H1 (cell line): ENCODE measurements at regions of chr17 and their contacts with region 1.

Region 1: DNA sequence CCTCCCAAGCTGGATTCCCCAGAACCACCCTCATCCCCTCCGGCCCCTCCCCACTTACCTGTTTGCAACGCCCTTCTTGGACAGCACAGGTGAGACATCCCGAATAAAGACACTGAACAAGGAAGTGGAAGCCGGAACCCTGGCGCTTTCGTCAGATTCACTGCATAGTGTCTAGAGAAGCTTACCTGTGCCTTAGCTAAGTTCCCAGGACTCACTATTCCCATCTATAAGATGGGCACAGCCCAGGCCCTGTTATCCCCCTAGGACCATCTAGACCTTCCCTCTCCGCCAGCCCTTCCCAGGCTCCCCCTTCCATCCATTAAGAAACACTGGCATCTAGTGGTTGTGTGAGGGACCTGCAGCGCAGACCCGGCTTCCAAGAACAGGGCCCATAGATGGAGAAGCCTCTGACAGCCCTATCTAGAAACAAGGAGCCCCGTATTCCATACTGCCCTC is 26.9 kb upstream of the RPL38 start:
- DNase-seq: peak; percentile 50 to 85
- H3K4me3 ChIP-seq: no peak overlapping the region
- H3K27ac ChIP-seq: no peak overlapping the region
- H3K4me1 ChIP-seq: 0 out of 7 replicates have a peak, but pooled peaks cover 0 to 4% (median 0%) of the 10 kb centered on the region in 4 experiments
- H3K27me3 ChIP-seq: 0 out of 7 replicates have a peak, but pooled peaks cover 0 to 1% (median 0%) of the 10 kb centered on the region in 4 experiments
- CTCF ChIP-seq: peak; percentile 86 to 97 (median 95)
- EP300 ChIP-seq: no peak
- POLR2A ChIP-seq: no peak
- RAD21 ChIP-seq: peak; percentile 99 to 100

Region 2: DNA sequence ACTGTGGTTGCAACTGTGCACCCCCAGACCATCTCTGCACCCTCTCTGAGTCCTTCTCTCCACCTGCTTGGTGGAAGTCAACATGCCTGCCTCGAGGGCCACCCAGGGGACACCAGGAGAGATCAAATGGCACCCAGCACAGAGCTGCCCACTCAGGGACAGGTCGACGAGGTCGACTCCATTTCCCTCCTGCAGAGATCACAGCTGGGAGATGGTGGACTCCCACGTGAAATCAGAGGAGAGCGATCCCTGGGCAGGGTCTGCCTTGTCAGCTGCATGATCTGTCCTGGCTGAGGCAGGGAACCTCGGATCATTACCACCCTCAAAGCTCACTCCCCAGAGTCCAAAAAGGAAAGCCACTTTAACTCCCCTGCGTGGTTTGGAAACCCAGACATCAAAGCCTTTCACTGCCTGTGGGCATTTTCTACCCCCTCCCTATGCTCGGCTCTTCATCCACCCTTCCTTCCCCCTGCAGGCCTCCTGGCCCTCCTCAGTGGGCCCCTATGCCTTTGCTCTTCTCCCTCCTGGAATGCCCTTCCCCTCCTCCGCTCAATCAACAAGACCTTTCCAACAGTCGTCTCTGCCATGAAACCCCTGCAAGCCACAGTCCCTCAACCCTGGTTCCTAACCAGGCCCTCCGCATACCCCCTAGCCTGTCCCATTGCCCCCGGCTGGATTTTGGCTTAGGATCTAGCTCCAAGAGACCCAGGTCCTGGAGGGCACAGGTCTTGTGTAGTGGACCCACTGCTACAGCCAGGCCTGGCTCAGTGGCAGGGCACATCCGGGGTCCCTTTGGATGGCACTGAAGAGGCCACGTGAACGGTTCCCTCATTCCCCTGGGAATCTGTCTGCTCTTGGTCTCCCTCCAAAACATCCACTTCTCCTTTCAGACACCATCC is 76.9 kb before region 1 on chr17:
- CTCF ChIA-PET with region 1: interaction called, 10 read pairs
- POLR2A ChIA-PET with region 1: no interaction called
- DNase-seq: no peak
- H3K4me3 ChIP-seq: no peak overlapping the region
- H3K27ac ChIP-seq: no peak overlapping the region
- H3K4me1 ChIP-seq: peaks cover 0 to 7% (median 4%) of the 10 kb centered on the region in 4 experiments; a peak in 3 of 7 replicates
- H3K27me3 ChIP-seq: no peaks in the 10 kb centered on the region
- CTCF ChIP-seq: no peak
- EP300 ChIP-seq: no peak
- POLR2A ChIP-seq: no peak
- RAD21 ChIP-seq: no peak

Region 3: DNA sequence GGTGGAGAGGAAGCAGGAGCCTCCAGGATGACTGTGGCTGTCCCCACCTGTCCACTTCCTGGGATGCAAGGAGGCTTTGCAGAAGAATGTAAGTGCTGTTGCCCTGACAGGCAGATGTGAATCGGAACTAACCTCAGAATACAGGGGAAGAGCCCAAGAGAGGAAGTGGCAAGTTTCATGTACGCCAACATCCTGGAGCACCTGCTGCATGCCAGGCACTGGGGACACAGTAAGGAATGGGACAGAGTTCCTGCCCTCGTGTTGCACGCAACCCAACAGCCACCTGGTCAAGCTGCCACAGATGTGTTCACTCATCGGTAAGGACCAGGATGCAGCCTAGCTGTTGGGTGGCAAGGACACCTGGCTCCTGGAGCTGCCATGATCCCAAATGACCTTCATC is 71.7 kb before region 1 on chr17:
- CTCF ChIA-PET with region 1: interaction called, 10 read pairs
- POLR2A ChIA-PET with region 1: no interaction called
- DNase-seq: no peak
- H3K4me3 ChIP-seq: no peak overlapping the region
- H3K27ac ChIP-seq: no peak overlapping the region
- H3K4me1 ChIP-seq: peaks cover 0 to 8% (median 1%) of the 10 kb centered on the region in 4 experiments; a peak in 3 of 7 replicates
- H3K27me3 ChIP-seq: peaks cover 0 to 2% (median under 1%) of the 10 kb centered on the region in 4 experiments; a peak in 1 of 7 replicates
- CTCF ChIP-seq: no peak
- EP300 ChIP-seq: no peak
- POLR2A ChIP-seq: no peak
- RAD21 ChIP-seq: no peak

Region 4: DNA sequence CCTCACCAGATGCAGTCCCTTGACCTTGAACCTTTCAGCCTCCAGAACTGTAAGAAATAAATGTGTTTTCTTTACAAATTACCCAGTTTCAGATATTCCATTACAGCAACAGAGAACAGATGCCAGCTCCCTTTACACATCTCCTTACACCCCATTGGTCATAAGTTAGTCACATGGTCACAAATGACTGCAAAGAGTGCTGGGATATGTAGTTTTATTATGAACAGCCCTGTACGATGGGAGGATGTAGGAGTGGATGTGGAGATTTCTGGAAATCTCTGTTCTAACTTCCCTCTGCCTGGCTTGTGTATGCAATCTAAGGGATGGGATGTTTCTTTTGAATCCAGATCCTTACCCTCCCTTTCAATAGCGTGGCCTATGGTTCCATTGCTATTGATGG is 13.6 kb after region 1 on chr17:
- CTCF ChIA-PET with region 1: interaction called, 14 read pairs
- POLR2A ChIA-PET with region 1: interaction called, 3 read pairs
- DNase-seq: no peak
- H3K4me3 ChIP-seq: no peak overlapping the region
- H3K27ac ChIP-seq: no peak overlapping the region
- H3K4me1 ChIP-seq: peaks cover 0 to 4% (median 0%) of the 10 kb centered on the region in 4 experiments; a peak in 1 of 7 replicates
- H3K27me3 ChIP-seq: no peaks in the 10 kb centered on the region
- CTCF ChIP-seq: no peak
- EP300 ChIP-seq: no peak
- POLR2A ChIP-seq: no peak
- RAD21 ChIP-seq: no peak